ENCODE measurements at regions of chrX and their contacts with region 1.

Region 1: DNA sequence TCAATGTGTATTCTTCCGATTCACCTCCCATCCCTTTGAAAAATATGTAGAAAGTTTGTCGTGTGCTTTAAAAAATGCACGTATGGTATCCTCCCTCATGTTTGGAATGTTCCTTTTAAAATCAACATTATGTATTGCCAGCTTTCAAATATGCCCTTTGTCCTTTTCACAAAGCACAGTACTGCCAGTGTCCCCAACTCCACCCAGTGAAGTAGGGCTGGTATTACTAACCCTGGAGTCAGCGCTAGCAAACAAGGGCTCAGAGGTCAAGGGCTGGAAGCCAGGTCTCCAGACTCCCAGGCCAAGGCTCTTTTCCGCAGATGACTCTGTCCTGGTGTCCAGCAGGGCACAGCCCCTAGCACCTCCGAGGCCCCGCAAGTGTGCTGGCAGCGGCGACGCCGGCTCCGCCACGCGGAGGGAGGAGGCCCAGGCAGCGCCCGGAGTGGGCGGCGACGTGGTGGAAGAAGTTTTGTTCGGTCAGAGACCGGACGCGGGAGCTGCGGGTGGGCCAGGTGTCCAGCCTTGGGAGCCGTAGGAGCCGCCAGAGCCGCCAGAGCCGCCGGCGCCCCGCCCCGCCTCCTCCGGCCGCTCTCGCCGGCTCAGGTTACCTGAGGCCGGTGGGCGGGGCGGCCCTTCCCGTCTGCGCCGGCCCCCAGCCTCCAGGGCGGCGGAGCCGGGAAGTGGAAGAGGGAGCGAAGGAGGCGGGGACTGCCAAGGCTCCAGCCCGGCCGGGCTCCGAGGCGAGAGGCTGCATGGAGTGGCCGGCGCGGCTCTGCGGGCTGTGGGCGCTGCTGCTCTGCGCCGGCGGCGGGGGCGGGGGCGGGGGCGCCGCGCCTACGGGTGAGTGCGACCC is at the start of gene IL13RA1:
- DNase-seq: peak; percentile 82 to 91
- H3K4me3 ChIP-seq: peak within 1 kb of the TSS; percentile 64
- H3K4me3 Mint-ChIP-seq: peak within 1 kb of the TSS; percentile 71
- H3K27ac Mint-ChIP-seq: peak within 1 kb of the TSS; percentile 70
- H3K4me1 ChIP-seq: peaks cover 14% of the 10 kb centered on the region
- H3K4me1 Mint-ChIP-seq: peaks cover 19% of the 10 kb centered on the region
- H3K27me3 ChIP-seq: no peaks in the 10 kb centered on the region
- H3K27me3 Mint-ChIP-seq: no peaks in the 10 kb centered on the region
- CTCF ChIP-seq: no peak
- total RNA-seq, gene IL13RA1: 33.2 and 33.4 TPM in 2 replicates

Region 2: GRCh38 chrX:118644378-118644777 is 82.7 kb before region 1 on chrX:
- CTCF ChIA-PET with region 1: no interaction called
- POLR2A ChIA-PET with region 1: no interaction called
- intact Hi-C with region 1: loop called (anchors 1 kb)
- DNase-seq: peak in 1 of 2 experiments; percentile 23
- H3K4me3 ChIP-seq: no peak overlapping the region
- H3K4me3 Mint-ChIP-seq: no peak overlapping the region
- H3K27ac Mint-ChIP-seq: no peak overlapping the region
- H3K4me1 ChIP-seq: no peaks in the 10 kb centered on the region
- H3K4me1 Mint-ChIP-seq: peaks cover 9% of the 10 kb centered on the region
- H3K27me3 ChIP-seq: no peaks in the 10 kb centered on the region
- H3K27me3 Mint-ChIP-seq: no peaks in the 10 kb centered on the region
- CTCF ChIP-seq: peak in 1 of 2 experiments; percentile 41

Region 3: GRCh38 chrX:118666548-118666947 is 60.6 kb before region 1 on chrX:
- CTCF ChIA-PET with region 1: no interaction called
- POLR2A ChIA-PET with region 1: no interaction called
- intact Hi-C with region 1: loop called (anchors 5 kb)
- DNase-seq: no peak
- H3K4me3 ChIP-seq: no peak overlapping the region
- H3K4me3 Mint-ChIP-seq: no peak overlapping the region
- H3K27ac Mint-ChIP-seq: no peak overlapping the region
- H3K4me1 ChIP-seq: no peaks in the 10 kb centered on the region
- H3K4me1 Mint-ChIP-seq: peaks cover 6% of the 10 kb centered on the region
- H3K27me3 ChIP-seq: no peaks in the 10 kb centered on the region
- H3K27me3 Mint-ChIP-seq: no peaks in the 10 kb centered on the region
- CTCF ChIP-seq: no peak

Region 4: GRCh38 chrX:118682258-118683014 is 44.7 kb before region 1 on chrX:
- CTCF ChIA-PET with region 1: no interaction called
- POLR2A ChIA-PET with region 1: no interaction called
- intact Hi-C with region 1: loop called (anchors 5 kb)
- DNase-seq: no peak
- H3K4me3 ChIP-seq: no peak overlapping the region
- H3K4me3 Mint-ChIP-seq: no peak overlapping the region
- H3K27ac Mint-ChIP-seq: no peak overlapping the region
- H3K4me1 ChIP-seq: no peaks in the 10 kb centered on the region
- H3K4me1 Mint-ChIP-seq: no peaks in the 10 kb centered on the region
- H3K27me3 ChIP-seq: no peaks in the 10 kb centered on the region
- H3K27me3 Mint-ChIP-seq: no peaks in the 10 kb centered on the region
- CTCF ChIP-seq: no peak

Region 5: GRCh38 chrX:118745570-118745969 is 18.5 kb after region 1 on chrX:
- CTCF ChIA-PET with region 1: no interaction called
- POLR2A ChIA-PET with region 1: no interaction called
- intact Hi-C with region 1: no loop called
- DNase-seq: no peak
- H3K4me3 ChIP-seq: no peak overlapping the region
- H3K4me3 Mint-ChIP-seq: no peak overlapping the region
- H3K27ac Mint-ChIP-seq: no peak overlapping the region
- H3K4me1 ChIP-seq: no peaks in the 10 kb centered on the region
- H3K4me1 Mint-ChIP-seq: no peaks in the 10 kb centered on the region
- H3K27me3 ChIP-seq: no peaks in the 10 kb centered on the region
- H3K27me3 Mint-ChIP-seq: no peaks in the 10 kb centered on the region
- CTCF ChIP-seq: no peak

Region 6: DNA sequence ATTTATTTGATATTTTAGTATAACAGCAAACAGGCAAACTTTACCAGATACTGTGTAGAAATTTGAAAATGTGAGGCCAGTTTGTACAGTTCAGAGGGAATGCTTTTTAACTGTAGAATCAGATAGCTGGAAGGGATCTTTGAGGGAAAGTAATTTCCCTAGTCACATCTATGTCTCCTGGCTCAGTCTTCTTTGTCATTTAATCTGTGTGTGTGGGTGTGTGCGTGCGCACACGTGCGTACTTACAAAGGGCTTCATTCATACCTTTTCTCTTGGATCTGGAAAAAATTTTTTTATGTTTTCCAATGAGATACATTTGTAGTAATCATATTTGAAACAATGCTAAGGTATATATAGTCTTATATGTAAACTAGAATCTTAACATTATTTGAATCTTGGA is 44.9 kb after region 1 on chrX:
- CTCF ChIA-PET with region 1: no interaction called
- POLR2A ChIA-PET with region 1: no interaction called
- intact Hi-C with region 1: no loop called
- DNase-seq: no peak
- H3K4me3 ChIP-seq: no peak overlapping the region
- H3K4me3 Mint-ChIP-seq: no peak overlapping the region
- H3K27ac Mint-ChIP-seq: no peak overlapping the region
- H3K4me1 ChIP-seq: no peaks in the 10 kb centered on the region
- H3K4me1 Mint-ChIP-seq: no peaks in the 10 kb centered on the region
- H3K27me3 ChIP-seq: no peaks in the 10 kb centered on the region
- H3K27me3 Mint-ChIP-seq: no peaks in the 10 kb centered on the region
- CTCF ChIP-seq: no peak

Region 7: DNA sequence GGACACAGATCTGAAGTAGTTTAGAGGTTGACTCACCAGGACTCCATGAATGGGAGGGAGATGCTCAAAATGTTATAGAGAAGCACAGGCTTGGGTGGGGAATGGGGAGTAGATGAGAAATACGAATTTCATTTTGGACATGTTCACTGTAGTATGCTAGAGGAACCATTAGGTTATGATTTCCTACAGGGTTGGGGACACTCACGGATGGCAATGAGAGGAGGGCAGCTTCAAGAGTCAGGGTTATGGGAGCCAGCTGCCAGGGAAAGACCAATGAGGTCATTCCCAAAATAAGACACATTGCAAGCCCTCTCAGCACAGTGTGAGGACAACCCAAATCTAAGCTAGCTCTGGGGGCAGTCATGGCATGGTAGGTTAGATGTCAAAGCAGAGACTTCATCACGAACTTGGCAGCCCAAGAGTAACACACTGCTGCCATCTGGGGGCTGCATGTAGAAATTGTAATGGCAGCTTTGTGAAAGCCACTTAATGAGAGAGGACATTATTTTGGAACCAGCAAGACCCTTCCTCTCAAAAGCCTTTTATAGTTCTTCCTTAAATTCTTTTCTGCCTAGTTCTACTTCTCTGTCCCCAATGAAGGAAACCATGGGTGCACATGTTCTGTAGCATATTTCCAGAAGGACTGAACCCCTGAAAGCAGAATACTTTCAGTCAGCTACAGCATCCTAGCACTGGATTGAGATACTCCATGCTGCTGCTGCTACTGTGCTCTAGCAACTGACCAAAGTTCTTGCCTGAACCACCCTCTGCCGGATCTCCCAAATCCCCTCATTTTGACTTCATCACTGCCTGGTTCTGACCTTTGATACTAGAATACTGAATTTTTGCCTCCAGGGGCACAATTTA is 80.3 kb after region 1 on chrX:
- CTCF ChIA-PET with region 1: no interaction called
- POLR2A ChIA-PET with region 1: no interaction called
- intact Hi-C with region 1: no loop called
- DNase-seq: peak; percentile 36 to 49
- H3K4me3 ChIP-seq: no peak overlapping the region
- H3K4me3 Mint-ChIP-seq: no peak overlapping the region
- H3K27ac Mint-ChIP-seq: no peak overlapping the region
- H3K4me1 ChIP-seq: no peaks in the 10 kb centered on the region
- H3K4me1 Mint-ChIP-seq: no peaks in the 10 kb centered on the region
- H3K27me3 ChIP-seq: no peaks in the 10 kb centered on the region
- H3K27me3 Mint-ChIP-seq: no peaks in the 10 kb centered on the region
- CTCF ChIP-seq: peak; percentile 55 to 70